ENCODE measurements at regions of chr3 and their contacts with region 1.

Region 1: GRCh38 chr3:141105828-141106628 is 54.9 kb downstream of the SPSB4 start:
- DNase-seq: peak; percentile 78
- ATAC-seq: peak in 1 of 2 donors; percentile 6

Region 2: DNA sequence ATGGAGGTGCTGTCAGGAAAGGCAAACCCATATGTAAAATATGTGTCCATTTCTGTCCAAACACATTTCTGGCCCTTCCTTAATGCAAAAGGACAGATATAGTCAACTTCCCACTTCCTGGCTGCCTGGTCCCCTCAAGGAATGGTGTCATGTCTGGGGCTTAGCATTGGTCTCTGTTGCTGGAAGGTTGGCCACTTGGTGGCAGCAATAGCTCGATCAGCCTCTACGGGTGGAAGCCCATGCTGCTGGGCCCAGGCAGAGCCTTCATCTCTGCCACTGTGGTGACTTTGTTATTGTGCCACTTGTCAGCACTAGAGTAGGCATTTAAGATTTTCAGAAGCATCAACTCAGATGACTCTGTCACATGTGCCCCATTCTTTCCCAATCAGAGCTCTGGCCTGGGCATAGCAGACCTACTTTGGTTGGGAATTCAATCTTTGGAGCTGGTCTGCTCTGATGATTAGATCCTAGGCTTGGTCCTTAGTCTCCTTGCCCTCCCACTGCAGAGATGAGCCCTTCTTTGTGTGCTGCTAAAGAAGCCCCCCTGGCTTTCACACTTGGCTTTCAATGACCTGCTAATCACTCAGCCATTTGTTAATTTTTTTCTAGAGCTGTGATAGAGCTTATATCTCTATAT is 105.9 kb before region 1 on chr3:
- intact Hi-C with region 1: loop called in 1 of 2 experiments (anchors 10 kb)
- DNase-seq: peak; percentile 74
- ATAC-seq: peak; percentile 95 to 96

Region 3: DNA sequence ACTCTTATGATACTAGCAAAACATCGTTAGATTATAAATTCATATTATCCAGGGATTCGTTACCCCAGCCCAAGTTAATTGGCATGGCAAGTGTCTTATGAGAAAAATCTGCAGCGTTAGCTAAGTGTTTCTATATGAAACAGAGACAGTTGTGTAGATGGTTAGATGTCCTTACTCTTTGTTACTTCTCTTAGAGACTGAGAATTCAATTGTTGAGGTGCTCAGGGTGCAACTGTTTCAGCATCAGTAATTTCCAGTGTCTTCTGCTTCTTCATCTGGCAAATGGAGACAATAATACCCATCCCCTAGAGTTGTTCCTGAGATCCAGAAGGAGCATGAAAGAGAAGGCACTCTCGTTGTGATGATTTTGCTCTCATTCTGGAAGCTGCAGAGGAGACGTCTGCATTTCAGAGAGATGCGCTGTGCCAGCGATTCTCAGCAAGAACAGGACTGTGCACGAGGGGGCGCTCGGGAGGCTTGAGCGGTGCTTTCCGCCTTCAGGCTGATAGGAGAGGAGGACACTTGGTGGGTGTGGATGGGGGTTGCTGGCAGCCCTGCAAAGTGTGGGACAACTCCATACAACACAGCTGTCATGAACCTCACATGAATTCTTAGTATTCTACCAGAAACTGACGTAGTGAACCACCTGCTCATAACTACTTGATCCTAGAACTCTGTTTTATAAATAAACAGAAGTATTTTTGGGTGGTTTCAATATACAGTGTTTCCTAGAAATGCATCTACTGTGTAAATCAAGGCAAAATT is 94.6 kb before region 1 on chr3:
- intact Hi-C with region 1: loop called (anchors 2 to 10 kb)
- DNase-seq: peak; percentile 85
- ATAC-seq: peak; percentile 81 to 87

Region 4: DNA sequence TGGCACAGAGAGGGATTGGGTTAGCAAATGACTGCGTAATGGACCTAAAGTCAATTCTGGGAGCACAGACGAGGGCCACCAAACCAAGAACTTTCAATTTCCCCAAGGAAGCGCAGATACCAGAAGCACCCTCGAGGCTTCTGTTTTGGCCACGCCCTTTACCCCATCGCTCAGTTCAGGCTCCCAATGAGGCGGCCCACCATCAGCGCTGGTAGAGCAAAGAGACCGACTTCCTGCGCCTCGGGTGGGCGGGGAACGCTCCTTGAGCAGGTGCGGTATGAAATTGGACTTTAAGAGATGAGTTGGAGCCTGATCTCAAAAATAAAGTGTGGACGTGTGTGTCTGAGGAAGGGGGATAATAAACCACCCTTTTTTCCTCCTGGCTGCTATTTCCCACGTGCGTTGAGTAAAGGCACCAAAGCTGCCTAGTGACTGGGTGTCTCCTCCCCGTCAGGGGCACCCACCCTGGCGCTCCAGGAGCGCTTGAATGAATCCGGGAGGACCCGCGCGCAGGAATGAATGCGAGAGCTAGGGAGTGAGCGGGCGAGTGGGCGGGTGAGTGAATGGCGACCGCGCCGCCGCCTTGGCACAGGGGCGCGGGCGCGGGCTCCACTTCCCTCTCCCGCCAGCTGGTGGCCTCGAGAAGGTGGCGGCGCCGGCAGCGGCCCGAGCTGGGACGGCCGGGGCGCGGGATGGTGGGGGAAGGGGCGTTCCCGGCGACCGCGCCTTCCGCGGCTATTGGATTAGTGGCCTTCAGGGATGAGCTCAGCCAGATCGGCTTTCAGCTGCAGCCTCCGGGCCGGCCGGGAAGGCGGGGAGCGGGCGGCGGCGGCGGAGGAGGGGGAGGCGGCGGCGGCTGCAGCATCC is 55.2 kb before region 1 on chr3 and contains the start of gene SPSB4:
- intact Hi-C with region 1: loop called (anchors 2 to 10 kb)
- DNase-seq: peak; percentile 76
- ATAC-seq: peak; percentile 92 to 94
- total RNA-seq, gene SPSB4: 3.0 to 6.9 TPM